ENCODE measurements at regions of chr1 and their contacts with region 1.

Region 1: GRCh38 chr1:229227298-229227919 is 43.5 kb upstream of the RAB4A start:
- DNase-seq: peak; percentile 71 to 83 (median 80)
- H3K4me3 ChIP-seq: no peak overlapping the region
- H3K27ac ChIP-seq: no peak overlapping the region
- H3K4me1 ChIP-seq: peaks cover 9 to 26% (median 23%) of the 10 kb centered on the region in 4 experiments
- H3K27me3 ChIP-seq: peaks cover 0 to 6% (median 0%) of the 10 kb centered on the region in 5 experiments

Region 2: GRCh38 chr1:228664399-228664914 is 563.0 kb before region 1 on chr1:
- CTCF ChIA-PET with region 1: interaction called, 67 read pairs
- POLR2A ChIA-PET with region 1: no interaction called
- DNase-seq: peak; percentile 72 to 85 (median 74)
- H3K4me3 ChIP-seq: no peak overlapping the region
- H3K27ac ChIP-seq: no peak overlapping the region
- H3K4me1 ChIP-seq: peaks cover 0 to 9% (median 4%) of the 10 kb centered on the region in 4 experiments
- H3K27me3 ChIP-seq: peaks cover 0 to 7% (median 0%) of the 10 kb centered on the region in 5 experiments

Region 3: GRCh38 chr1:228691926-228692325 is 535.5 kb before region 1 on chr1:
- CTCF ChIA-PET with region 1: interaction called, 16 read pairs
- POLR2A ChIA-PET with region 1: no interaction called
- DNase-seq: peak; percentile 68 to 79 (median 78)
- H3K4me3 ChIP-seq: no peak overlapping the region
- H3K27ac ChIP-seq: no peak overlapping the region
- H3K4me1 ChIP-seq: peaks cover 0 to 2% (median 0%) of the 10 kb centered on the region in 4 experiments
- H3K27me3 ChIP-seq: peaks cover 0 to 6% (median 0%) of the 10 kb centered on the region in 5 experiments

Region 4: GRCh38 chr1:229238674-229239415 is 11.4 kb after region 1 on chr1:
- CTCF ChIA-PET with region 1: interaction called, 15 read pairs
- POLR2A ChIA-PET with region 1: no interaction called
- DNase-seq: no peak
- H3K4me3 ChIP-seq: no peak overlapping the region
- H3K27ac ChIP-seq: no peak overlapping the region
- H3K4me1 ChIP-seq: no peaks in the 10 kb centered on the region
- H3K27me3 ChIP-seq: peaks cover 0 to 5% (median 0%) of the 10 kb centered on the region in 5 experiments